Colonic mucosa (tissue), 4 donors: ENCODE measurements at regions of chr11 and their contacts with region 1.

Region 1: DNA sequence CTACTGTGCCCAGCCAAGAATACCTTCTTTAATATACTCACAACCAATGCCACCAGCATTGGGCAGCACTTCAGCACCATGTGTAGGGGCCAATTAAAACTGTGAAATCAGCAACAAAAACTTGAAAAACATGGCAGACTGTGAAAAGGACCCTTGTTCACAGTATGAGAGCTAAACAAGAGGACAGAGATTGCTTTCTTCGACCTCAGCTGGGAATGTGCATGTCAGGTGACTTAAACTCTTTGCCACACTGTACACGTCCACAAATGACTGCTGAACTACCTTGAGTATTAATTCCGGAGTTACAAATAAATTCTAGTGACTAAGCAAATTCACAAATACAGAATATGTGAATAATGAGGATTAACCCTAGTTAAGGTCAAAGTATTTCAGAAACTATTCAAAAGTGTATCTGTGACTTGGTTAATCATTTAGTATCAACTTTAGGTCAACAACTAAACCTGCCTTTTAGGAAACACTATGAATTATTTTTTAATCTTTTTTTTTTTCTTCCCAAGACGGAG is 33.0 kb downstream of the DDX6 start:
- DNase-seq: no peak
- H3K4me3 ChIP-seq: no peak overlapping the region
- H3K27ac ChIP-seq: no peak overlapping the region
- H3K4me1 ChIP-seq: no peaks in the 10 kb centered on the region
- H3K27me3 ChIP-seq: no peaks in the 10 kb centered on the region
- CTCF ChIP-seq: no peak

Region 2: GRCh38 chr11:118380571-118380970 is 377.4 kb before region 1 on chr11:
- intact Hi-C with region 1: loop called (anchors 10 kb)
- DNase-seq: no peak
- H3K4me3 ChIP-seq: no peak overlapping the region
- H3K27ac ChIP-seq: no peak overlapping the region
- H3K4me1 ChIP-seq: no peaks in the 10 kb centered on the region
- H3K27me3 ChIP-seq: no peaks in the 10 kb centered on the region
- CTCF ChIP-seq: no peak